PC-9 (cell line): ENCODE measurements at regions of chrX and their contacts with region 1.

Region 1: GRCh38 chrX:53224860-53225797 is at the start of gene KDM5C:
- DNase-seq: peak; percentile 68 to 88
- H3K4me3 ChIP-seq: peak within 1 kb of the TSS; percentile 61
- H3K27ac ChIP-seq: peak within 1 kb of the TSS; percentile 78
- H3K4me1 ChIP-seq: peaks cover 10% of the 10 kb centered on the region; the same call in 1 of the 2 replicates
- H3K27me3 ChIP-seq: no peaks in the 10 kb centered on the region
- CTCF ChIP-seq: no peak
- total RNA-seq, gene KDM5C: 133 and 142 TPM in 2 replicates

Region 2: DNA sequence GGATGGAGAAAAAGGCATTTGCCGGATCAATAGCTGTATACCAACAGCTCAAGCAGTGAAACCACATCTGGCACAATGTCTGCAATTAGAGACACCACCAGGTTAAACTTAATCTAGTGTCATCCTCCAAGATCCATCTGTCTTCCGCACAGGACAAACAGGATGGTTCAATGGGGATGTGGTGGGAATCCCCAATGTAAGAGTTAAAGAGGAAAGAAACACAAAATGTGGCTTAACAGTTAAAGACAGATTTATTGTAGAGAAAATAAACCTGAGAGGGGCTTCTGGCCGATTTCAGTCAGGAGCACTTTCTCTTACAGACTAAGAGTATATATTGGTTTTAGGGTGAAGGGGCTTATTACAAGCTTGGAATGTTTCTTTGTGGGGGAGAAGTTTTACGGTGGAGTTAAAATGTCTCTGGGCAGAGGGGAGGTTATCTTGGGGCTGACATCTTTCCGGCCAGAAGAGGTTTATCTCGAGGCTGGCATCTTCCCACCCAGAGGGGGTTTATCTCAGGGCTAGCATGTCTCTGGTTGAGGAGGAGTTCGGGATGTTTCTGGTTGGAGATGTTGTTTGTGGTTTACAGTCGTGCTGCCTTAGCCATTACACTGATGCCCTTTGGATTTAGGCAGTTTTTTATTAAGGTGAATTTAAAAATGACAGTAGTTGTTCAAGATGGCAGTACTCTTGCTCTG is 69.5 kb before region 1 on chrX:
- CTCF ChIA-PET with region 1: no interaction called
- POLR2A ChIA-PET with region 1: no interaction called
- intact Hi-C with region 1: no loop called
- DNase-seq: no peak
- H3K4me3 ChIP-seq: no peak overlapping the region
- H3K27ac ChIP-seq: no peak overlapping the region
- H3K4me1 ChIP-seq: no peaks in the 10 kb centered on the region
- H3K27me3 ChIP-seq: no peaks in the 10 kb centered on the region
- CTCF ChIP-seq: no peak

Region 3: DNA sequence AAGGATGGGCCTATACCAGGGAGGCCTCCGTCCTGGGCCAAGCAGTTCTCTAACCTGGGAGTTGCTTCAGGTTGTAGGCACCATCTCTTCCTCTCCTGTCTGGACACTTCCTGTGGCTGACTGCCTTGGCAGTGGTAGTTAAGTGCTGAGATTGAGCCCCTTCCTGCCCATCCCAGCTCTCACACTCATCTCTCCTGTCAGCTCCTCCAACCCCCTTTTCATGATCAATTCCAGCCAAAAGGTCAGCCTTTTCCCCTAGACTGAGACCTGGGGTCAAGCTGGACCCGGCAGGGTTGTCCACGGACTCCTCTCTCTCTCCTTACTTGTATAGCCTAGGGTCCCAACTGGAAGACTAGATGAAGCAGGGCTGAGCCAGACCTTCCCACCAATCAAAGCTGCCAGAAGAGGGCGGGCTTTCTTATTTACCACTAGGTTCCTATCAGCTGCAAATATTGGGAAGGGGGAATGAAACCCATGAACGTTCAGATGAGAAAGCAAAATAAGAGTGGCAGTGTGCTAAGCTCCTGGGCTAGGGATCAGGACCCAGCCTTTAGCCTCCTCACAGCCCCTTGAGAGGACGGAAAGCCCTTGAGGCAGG is 34.7 kb before region 1 on chrX:
- CTCF ChIA-PET with region 1: no interaction called
- POLR2A ChIA-PET with region 1: interaction called, 10 read pairs
- intact Hi-C with region 1: no loop called
- DNase-seq: no peak
- H3K4me3 ChIP-seq: no peak overlapping the region
- H3K27ac ChIP-seq: no peak overlapping the region
- H3K4me1 ChIP-seq: no peaks in the 10 kb centered on the region
- H3K27me3 ChIP-seq: no peaks in the 10 kb centered on the region
- CTCF ChIP-seq: no peak

Region 4: GRCh38 chrX:53284684-53285447 is 59.7 kb after region 1 on chrX:
- CTCF ChIA-PET with region 1: no interaction called
- POLR2A ChIA-PET with region 1: interaction called, 11 read pairs
- intact Hi-C with region 1: loop called (anchors 1 kb)
- DNase-seq: peak in 1 of 2 experiments; percentile 62
- H3K4me3 ChIP-seq: no peak overlapping the region
- H3K27ac ChIP-seq: no peak overlapping the region
- H3K4me1 ChIP-seq: peaks cover 10% of the 10 kb centered on the region; the same call in 1 of the 2 replicates
- H3K27me3 ChIP-seq: no peaks in the 10 kb centered on the region
- CTCF ChIP-seq: peak; percentile 69

Region 5: DNA sequence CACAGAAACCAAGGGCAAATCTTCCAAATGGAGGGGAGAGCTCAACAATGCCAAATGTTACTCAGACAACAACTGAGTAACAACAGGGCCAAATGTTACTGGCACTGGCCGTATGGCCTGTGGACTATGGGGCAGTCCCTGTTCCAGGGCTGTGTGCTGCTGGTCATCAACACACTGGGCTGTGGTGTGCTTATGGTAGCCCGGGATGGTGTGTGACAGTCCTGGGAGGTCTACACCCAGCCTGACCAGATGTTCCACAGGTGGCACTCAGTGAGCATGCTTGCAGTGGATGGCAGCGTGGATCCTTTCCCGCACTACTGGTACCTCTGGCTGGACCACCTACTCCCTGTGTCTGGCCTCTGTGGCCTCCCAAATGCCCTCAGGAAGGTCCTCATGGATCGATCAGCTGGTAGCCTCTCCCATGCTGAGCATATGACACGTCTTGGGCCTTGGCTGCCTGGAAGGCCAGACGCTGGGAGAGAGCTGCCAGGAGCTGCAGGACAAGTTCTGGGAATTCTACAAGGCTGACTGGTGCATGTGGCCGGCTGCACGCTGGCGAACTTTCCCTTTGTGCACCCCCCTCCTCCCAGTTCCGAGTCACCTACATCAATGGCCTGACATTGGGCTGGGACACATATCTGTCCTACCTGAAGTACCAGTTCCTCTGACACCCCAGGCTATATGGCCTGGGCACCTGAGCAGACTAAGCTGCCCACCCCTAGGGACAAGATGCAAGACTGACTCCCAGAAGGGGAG is 115.9 kb after region 1 on chrX:
- CTCF ChIA-PET with region 1: no interaction called
- POLR2A ChIA-PET with region 1: no interaction called
- intact Hi-C with region 1: no loop called
- DNase-seq: no peak
- H3K4me3 ChIP-seq: no peak overlapping the region
- H3K27ac ChIP-seq: no peak overlapping the region
- H3K4me1 ChIP-seq: no peaks in the 10 kb centered on the region
- H3K27me3 ChIP-seq: no peaks in the 10 kb centered on the region
- CTCF ChIP-seq: no peak